Endothelial cell of umbilical vein (primary cell): ENCODE measurements at regions of chr3 and their contacts with region 1.

Region 1: DNA sequence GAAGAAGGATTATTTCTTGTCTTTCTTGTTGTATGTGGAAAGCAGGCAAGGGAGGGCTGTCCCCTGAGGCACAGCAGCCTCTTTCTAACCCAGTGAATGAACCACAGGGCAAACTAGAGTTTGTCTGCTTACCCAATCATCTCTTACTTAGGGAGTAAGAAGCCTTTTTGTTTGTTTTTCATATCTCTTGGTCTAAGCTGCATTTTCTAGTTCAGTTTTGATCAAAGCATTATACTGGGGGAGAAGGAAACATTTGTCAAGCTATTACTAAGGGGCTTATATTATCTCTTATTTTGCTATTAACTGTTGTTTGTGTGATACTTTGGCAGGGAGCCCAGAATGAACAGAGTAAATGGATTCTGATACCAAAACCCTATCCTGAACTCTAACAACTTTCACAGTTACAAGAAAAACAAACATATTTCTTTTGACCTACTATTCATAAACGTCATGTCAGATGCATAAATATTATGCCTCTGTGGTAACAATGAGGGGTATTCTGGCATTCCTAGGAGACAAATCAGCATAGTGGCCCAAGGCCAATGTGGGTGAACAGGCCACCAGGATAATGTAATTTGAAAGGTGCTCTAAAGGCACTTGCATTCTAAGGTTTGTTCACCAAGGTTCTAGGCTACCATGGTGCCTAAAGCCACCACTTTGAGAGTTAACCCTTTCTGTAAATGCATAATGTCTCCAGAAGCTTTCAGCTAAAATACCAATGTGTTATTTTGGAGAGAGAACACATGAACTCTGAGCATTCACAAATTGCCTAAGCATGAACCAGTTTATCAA is 271.6 kb upstream of the ZPLD1 start:
- DNase-seq: peak; percentile 98
- H3K4me3 ChIP-seq: no peak overlapping the region
- H3K27ac ChIP-seq: peak overlapping the region; percentile 94
- H3K4me1 ChIP-seq: peaks cover 28% of the 10 kb centered on the region
- H3K27me3 ChIP-seq: no peaks in the 10 kb centered on the region
- CTCF ChIP-seq: no peak
- POLR2A ChIP-seq: no peak

Region 2: GRCh38 chr3:101685870-101686412 is 477.3 kb before region 1 on chr3:
- CTCF ChIA-PET with region 1: no interaction called
- POLR2A ChIA-PET with region 1: no interaction called
- dilution Hi-C with region 1: no loop called
- intact Hi-C with region 1: loop called (anchors 1 kb)
- DNase-seq: no peak
- H3K4me3 ChIP-seq: peak overlapping the region; percentile 75 to 96 (median 80)
- H3K27ac ChIP-seq: peak overlapping the region; percentile 78
- H3K4me1 ChIP-seq: peaks cover 20% of the 10 kb centered on the region
- H3K27me3 ChIP-seq: no peaks in the 10 kb centered on the region
- CTCF ChIP-seq: no peak
- POLR2A ChIP-seq: no peak

Region 3: GRCh38 chr3:101940521-101941317 is 222.5 kb before region 1 on chr3:
- CTCF ChIA-PET with region 1: no interaction called
- POLR2A ChIA-PET with region 1: no interaction called
- dilution Hi-C with region 1: no loop called
- intact Hi-C with region 1: loop called (anchors 2 kb)
- DNase-seq: peak; percentile 94
- H3K4me3 ChIP-seq: peak overlapping the region in 1 of 3 experiments; percentile 46
- H3K27ac ChIP-seq: peak overlapping the region; percentile 88
- H3K4me1 ChIP-seq: peaks cover 51% of the 10 kb centered on the region
- H3K27me3 ChIP-seq: no peaks in the 10 kb centered on the region
- CTCF ChIP-seq: no peak
- POLR2A ChIP-seq: no peak

Region 4: GRCh38 chr3:102106416-102107097 is 56.7 kb before region 1 on chr3:
- CTCF ChIA-PET with region 1: interaction called, 3 read pairs
- POLR2A ChIA-PET with region 1: no interaction called
- dilution Hi-C with region 1: no loop called
- intact Hi-C with region 1: loop called (anchors 2 kb)
- DNase-seq: peak; percentile 72
- H3K4me3 ChIP-seq: no peak overlapping the region
- H3K27ac ChIP-seq: peak overlapping the region; percentile 43
- H3K4me1 ChIP-seq: peaks cover 8% of the 10 kb centered on the region
- H3K27me3 ChIP-seq: no peaks in the 10 kb centered on the region
- CTCF ChIP-seq: no peak
- POLR2A ChIP-seq: no peak

Region 5: DNA sequence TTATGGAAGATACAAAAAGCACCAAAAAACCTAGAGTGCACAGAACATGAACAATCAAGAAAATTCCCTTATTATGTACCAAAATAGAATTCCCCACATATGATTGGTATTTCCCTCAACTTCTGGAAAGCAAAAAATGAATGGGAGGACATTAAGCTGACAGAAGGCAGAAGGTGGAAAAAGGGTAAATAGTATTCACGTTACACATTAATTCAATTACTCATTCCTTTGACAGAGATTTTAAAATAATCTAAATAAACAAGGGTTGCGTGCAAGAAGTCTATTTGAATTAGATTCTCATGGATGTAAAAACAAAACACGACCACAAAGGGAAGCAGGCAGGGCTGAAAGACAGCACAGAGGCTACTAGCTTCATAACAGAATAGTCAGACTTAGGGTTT is 11.1 kb after region 1 on chr3:
- CTCF ChIA-PET with region 1: interaction called, 10 read pairs
- POLR2A ChIA-PET with region 1: interaction called, 6 read pairs
- dilution Hi-C with region 1: no loop called
- intact Hi-C with region 1: loop called (anchors 1 kb)
- DNase-seq: peak; percentile 87
- H3K4me3 ChIP-seq: no peak overlapping the region
- H3K27ac ChIP-seq: peak overlapping the region; percentile 91
- H3K4me1 ChIP-seq: peaks cover 56% of the 10 kb centered on the region
- H3K27me3 ChIP-seq: no peaks in the 10 kb centered on the region
- CTCF ChIP-seq: no peak
- POLR2A ChIP-seq: no peak